ENCODE measurements at regions of chr2 and their contacts with region 1.

Region 1: DNA sequence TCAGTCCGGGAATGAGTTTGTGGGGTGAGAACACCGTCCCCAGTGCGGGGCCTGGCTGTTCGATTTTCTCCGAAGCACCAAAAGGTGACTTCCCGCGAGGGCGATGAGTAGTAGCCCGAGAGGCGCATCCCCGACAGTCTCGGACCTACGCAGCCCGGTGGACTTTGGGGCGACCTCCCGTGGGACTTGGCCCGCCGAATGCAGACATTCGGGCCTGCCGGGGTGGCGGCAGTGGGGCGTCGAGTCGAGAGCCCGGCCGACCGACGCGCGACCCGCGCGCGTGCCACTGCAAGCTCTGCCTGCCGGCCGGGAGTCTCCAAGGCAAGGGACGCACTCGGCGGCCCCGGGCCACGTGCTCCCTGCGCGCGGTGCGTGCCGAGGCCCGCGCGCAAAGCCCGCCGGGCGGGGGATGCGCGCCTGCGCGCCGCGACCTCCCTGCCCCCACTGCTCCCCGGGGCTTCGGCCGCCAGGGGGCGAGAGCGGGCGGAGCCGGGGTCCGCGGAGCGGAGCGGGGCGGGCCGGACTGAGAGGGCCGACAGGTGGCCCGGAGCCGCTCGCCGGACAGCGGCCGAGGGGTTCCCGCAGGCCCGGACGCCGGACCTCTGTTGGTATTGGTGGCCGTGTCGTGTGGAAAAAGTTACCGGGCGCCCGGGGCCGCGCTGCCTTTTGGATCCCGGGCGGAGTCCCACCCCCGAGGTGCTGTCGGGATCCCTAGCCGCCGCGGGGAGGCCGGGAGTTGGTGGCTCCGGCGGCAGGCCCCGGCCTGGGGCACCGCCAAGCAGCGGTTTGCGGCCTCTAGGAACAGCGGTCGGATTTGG is 1.9 kb downstream of the PTMA start:
- DNase-seq: peak; percentile 84
- H3K4me3 ChIP-seq: peak overlapping the region; percentile 91
- H3K27ac ChIP-seq: peak overlapping the region; percentile 100
- H3K4me1 ChIP-seq: peaks cover 13% of the 10 kb centered on the region
- H3K27me3 ChIP-seq: no peaks in the 10 kb centered on the region
- CTCF ChIP-seq: peak; percentile 61

Region 2: GRCh38 chr2:231563378-231563961 is 146.7 kb before region 1 on chr2:
- intact Hi-C with region 1: loop called (anchors 10 kb)
- DNase-seq: peak; percentile 38
- H3K4me3 ChIP-seq: no peak overlapping the region
- H3K27ac ChIP-seq: no peak overlapping the region
- H3K4me1 ChIP-seq: no peaks in the 10 kb centered on the region
- H3K27me3 ChIP-seq: no peaks in the 10 kb centered on the region
- CTCF ChIP-seq: peak; percentile 49

Region 3: DNA sequence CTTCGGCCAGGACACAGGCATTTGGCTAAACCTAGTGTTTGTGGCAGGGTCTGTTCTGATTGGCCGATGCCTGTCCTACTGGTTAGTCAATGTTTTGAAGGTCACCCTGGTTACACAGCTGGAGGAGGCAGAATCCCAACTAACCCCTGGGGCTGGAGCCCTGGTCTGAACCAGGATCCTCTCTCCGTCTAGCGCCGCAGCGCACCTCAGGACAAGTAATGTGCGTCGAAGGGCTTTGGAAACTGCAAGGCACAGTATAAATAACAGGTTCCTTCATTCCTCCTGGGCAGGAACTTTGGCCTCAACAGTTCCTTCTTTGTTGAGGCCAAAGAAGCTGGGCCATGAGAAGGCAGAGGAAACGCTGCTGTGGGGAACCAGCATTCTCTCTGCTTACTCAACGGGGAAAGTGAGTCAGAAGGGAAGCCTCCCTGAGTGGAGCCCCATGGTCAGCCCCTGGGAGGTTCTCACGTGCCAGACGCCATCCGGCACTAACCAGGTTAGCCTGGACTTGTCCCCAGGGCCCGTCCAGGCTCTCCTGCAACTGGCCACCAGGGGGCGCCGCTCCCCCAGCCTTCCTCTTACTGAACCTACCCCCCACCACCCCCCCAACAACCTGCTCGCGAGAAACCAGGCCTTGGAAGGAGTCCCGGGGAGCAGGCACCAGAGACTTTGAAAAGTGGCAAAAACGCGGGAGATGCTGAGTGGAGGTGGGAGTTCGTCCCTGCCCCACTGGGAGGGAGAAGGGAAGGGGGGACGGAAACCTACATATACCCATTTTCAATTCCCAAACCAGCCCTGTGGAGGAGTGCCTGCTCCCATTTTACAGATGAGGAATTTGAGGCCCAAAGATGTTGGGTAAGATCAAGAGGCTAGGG is 97.8 kb before region 1 on chr2:
- intact Hi-C with region 1: loop called (anchors 2 kb)
- DNase-seq: peak; percentile 97
- H3K4me3 ChIP-seq: no peak overlapping the region
- H3K27ac ChIP-seq: peak overlapping the region; percentile 94
- H3K4me1 ChIP-seq: peaks cover 33% of the 10 kb centered on the region
- H3K27me3 ChIP-seq: no peaks in the 10 kb centered on the region
- CTCF ChIP-seq: peak; percentile 96

Measured in colonic mucosa (tissue), 4 donors.